AG04449 (cell line): ENCODE measurements at regions of chr15 and their contacts with region 1.

Region 1: GRCh38 chr15:41465822-41466421 is 27.8 kb upstream of the ITPKA start:
- DNase-seq: peak; percentile 14
- H3K4me3 ChIP-seq: no peak overlapping the region
- CTCF ChIP-seq: peak; percentile 83

Region 2: DNA sequence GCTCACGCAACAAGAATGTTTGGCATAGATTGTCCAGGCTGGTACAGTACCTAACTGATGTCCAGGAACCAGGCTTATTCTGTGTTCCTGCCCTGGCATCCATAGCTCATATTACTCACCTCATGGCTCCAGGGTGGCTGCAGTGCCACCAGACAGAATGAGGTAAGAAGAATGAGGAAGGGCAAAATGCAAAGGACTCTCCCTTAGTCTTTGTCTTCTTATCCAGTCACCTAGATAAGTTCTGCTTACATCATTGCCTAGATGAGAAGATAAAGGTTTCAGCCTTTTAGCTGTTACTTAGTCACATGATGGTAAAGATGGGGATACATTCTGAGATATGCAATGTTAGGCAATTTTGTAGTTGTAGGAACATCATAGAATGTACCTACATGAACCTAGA is 189.1 kb before region 1 on chr15:
- CTCF ChIA-PET with region 1: no interaction called
- POLR2A ChIA-PET with region 1: no interaction called
- DNase-seq: no peak
- H3K4me3 ChIP-seq: no peak overlapping the region
- CTCF ChIP-seq: no peak

Region 3: DNA sequence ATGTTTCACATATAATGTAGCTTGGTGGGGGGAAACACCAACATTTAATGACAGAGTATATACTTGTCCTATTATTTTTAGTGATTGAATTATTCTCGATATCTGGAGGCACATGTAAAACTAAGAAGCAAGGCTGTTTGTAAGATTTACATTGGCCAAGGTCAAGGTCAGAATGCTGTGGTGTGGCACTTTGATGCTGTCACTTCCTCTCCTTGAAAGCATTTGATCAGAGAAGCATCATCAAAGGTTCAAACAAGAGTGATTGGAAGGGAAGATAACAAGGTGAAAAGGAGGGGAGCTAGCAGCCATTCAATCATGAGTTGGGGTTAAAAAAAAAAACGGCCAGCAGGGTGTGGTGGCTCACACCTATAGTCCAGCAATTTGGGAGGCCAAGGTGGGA is 22.6 kb before region 1 on chr15:
- CTCF ChIA-PET with region 1: interaction called, 14 read pairs
- POLR2A ChIA-PET with region 1: no interaction called
- DNase-seq: no peak
- H3K4me3 ChIP-seq: no peak overlapping the region
- CTCF ChIP-seq: no peak

Region 4: DNA sequence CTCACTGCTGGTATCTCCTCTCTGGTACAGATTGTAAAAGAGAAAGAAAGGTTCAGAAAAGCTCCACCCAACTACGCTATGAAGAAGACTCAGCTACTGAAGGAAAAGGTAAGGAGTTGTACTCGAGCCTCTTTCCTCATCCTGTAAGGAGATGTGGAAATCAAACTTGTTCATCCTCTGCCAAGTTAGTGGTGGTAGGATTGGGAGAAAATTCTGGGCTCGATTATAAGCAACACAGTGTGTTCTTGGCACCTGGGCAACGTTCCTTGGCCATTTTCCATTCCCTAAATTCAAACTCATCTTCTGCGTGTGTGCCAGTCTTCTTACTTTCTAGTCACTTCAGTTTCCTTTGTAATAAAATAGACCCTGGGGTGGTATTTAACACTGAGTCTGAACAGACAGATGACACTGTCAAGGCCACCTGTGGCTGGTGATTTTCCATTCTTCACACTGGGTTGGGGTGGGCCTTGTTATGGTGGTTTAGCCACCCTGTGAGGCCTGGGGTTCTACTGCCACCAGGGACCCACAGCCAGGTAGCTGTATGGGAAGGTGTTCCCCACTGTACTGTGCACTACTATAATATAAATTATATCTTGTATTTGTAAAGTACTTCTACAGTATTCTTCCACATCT is 10.6 kb after region 1 on chr15:
- CTCF ChIA-PET with region 1: interaction called, 34 read pairs
- POLR2A ChIA-PET with region 1: no interaction called
- DNase-seq: no peak
- H3K4me3 ChIP-seq: no peak overlapping the region
- CTCF ChIP-seq: no peak

Region 5: DNA sequence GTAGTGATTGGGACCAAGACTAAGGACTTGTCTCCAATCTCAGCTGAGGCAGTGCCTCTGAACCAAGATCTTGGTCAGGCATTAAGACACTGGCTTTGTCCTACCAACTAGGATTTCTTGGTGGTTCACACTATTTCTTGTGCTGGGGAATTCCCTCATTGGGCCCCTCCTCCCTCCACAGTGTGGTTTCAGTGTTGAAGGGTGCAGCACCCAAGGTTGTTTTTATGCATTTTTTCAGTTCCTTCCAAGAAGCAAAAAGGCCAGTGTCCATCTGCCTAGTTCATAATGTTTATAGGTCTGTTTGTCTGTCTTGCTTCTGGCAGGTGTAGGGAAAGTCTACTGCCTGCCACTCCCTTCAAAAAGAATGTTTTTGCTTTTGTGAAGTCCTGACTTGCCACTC is 17.2 kb after region 1 on chr15:
- CTCF ChIA-PET with region 1: interaction called, 12 read pairs
- POLR2A ChIA-PET with region 1: no interaction called
- DNase-seq: no peak
- H3K4me3 ChIP-seq: no peak overlapping the region
- CTCF ChIP-seq: no peak

Region 6: DNA sequence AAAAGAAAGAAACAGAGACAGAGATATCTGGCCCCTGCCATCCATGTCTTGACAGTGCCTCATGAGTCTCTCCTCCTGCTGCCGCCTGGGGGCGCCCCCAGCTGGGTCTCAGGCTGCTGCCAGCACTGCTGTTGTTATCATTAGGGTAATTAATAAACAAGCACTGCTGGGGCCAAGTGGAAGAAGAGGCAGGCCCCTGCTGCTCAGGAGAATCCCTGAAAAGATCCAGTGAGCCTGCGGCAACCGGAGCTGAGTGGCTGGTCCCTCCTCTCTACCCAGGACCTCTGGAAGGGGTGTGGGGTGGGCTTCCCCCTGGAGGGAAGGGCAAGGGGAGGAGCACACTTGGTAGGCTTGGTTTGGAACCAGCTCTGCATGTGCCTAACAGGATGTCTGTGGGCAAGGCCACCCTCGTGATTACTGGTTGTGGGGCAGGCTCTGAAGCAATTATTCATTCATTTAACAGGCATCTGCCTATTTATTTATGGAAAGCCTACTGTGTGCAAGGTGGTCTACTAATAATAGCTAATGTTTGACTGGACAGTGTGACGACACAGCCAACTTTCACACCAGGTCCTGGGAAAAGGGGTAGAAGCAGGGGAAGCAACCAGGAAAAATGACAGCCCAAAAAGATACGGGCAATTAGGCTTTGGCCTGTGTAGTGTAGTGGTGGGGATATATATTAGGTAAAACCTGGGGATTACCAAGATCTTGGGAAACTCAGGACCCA is 91.9 kb after region 1 on chr15:
- CTCF ChIA-PET with region 1: interaction called, 20 read pairs
- POLR2A ChIA-PET with region 1: no interaction called
- DNase-seq: no peak
- H3K4me3 ChIP-seq: peak overlapping the region; percentile 54
- CTCF ChIP-seq: peak; percentile 84

Region 7: GRCh38 chr15:41585127-41586047 is 119.5 kb after region 1 on chr15:
- CTCF ChIA-PET with region 1: interaction called, 13 read pairs
- POLR2A ChIA-PET with region 1: no interaction called
- DNase-seq: no peak
- H3K4me3 ChIP-seq: peak overlapping the region; percentile 46
- CTCF ChIP-seq: peak; percentile 55

Region 8: DNA sequence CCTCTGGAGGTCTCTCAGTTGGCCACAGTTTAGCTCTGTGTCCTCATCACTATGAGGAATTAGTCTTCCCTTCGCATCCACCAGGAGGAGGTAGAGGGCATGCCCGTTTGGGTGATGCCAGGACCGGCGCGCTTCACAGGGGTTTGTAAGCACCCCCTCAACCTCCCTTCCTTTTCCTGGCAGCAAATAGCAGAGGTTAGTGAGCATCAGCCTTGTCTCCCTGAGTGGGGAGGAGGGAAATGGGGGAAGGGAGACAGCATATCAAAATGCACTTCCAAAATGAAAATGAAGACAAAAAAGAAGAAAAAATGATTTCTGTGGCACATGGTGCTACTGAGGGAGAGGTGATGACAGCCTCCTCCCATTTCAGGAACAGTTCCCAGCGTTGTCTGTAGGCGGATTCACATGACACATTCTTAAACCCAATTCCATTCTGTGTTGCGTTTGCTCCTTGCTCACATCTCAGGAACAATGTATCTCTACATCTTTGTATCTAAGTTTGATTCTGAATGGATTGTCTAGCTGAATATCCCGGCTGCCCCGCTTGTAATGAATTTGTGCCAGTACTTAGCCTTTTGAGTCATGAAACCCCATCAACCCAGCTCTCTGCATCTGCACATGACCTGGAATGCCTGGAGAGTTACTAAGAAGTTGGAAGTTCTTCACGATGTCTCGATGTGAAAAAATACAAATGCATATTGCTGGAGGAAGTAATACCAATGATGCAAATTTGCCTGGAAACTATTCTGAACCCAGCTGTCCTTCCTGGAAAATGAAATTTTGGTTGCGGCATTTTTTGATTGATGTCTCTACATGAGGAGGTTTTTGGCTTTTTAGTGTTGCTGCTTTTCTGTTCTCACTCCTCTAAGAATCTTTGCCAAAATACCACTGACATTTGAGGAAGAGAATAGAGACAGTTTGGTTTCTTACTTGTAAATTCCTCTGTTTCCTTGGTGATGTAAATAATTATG is 138.3 kb after region 1 on chr15:
- CTCF ChIA-PET with region 1: interaction called, 26 read pairs
- POLR2A ChIA-PET with region 1: interaction called, 3 read pairs
- DNase-seq: peak; percentile 47
- H3K4me3 ChIP-seq: peak overlapping the region; percentile 50
- CTCF ChIP-seq: peak; percentile 86